Activated CD4-positive, alpha-beta T cell treated with anti-CD3 and anti-CD28 coated beads for 36 hours (primary cell): ENCODE measurements at regions of chr9 and their contacts with region 1.

Region 1: DNA sequence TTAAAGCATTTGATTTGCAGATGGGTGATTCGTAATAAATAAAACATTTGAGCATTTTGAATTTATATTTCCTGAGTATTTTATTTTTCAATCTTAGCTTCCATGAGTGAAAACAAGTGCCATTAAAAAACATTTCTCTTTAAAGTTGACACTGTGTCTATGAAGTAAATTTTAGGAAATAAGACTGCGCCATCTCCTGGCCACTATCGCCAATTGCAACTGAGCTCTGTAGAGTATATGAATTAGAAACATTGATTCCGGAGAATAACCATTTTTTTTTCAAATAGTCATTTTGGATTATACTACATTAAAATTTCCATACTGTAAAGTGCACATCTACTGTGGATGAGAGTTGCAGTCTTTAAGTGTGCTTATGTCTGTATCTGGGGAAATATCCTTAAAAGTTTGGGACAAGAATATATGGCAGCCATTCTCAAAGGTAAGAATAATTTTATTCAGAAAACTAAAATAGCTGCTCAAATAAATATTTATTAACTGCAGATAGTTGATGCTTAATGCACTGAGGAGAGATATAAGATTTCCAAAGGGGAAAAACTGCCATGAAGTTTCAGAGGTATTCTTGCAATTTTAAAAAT is 5.9 kb downstream of the DMRTA1 start:
- DNase-seq: peak; percentile 68
- ATAC-seq: no peak
- H3K4me3 Mint-ChIP-seq: no peak overlapping the region
- H3K27ac Mint-ChIP-seq: no peak overlapping the region
- H3K4me1 Mint-ChIP-seq: peaks cover 3% of the 10 kb centered on the region
- H3K27me3 Mint-ChIP-seq: peaks cover 37% of the 10 kb centered on the region

Region 2: DNA sequence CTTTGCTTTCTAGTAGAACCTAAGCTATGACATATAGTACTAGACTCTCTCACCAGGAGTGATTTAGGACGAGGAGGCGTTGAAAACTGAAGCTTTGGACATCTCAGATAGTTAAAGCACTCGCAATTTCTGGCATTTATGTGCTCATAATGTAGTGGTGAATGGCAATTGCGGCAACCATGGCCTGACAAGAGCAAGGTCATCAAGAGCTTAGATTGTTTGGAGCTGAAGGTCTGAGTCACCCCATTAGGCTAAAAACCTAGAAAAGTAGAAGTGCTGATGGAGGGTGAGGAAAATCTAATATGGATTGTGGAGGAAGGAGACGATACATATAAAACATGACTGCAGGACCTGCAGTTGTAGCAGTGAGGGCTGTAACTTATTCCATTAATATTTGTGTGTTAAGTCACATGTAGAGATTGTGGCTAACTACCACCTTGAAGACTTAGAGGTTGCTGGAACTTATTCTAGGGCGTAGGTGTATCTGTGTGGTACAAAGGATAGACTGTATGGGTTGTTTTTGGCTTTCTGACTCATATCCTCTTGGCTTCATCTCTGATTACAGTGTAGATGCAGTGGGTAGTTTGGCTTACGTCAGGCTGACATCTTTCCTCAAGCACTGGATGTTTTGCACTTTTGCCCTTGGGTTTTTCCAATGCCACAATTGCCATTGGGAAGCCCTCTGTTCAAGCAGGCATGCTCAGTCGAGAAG is 304.5 kb before region 1 on chr9:
- CTCF ChIA-PET with region 1: no interaction called
- POLR2A ChIA-PET with region 1: no interaction called
- intact Hi-C with region 1: loop called in 1 of 2 experiments (anchors 10 kb)
- DNase-seq: peak; percentile 18
- ATAC-seq: peak; percentile 97
- H3K4me3 Mint-ChIP-seq: no peak overlapping the region
- H3K27ac Mint-ChIP-seq: no peak overlapping the region
- H3K4me1 Mint-ChIP-seq: peaks cover 17% of the 10 kb centered on the region
- H3K27me3 Mint-ChIP-seq: peaks cover 32% of the 10 kb centered on the region

Region 3: GRCh38 chr9:22307013-22307711 is 145.4 kb before region 1 on chr9:
- CTCF ChIA-PET with region 1: interaction called, 7 read pairs
- POLR2A ChIA-PET with region 1: no interaction called
- intact Hi-C with region 1: loop called (anchors 1 to 2 kb)
- DNase-seq: peak; percentile 11
- ATAC-seq: no peak
- H3K4me3 Mint-ChIP-seq: no peak overlapping the region
- H3K27ac Mint-ChIP-seq: no peak overlapping the region
- H3K4me1 Mint-ChIP-seq: no peaks in the 10 kb centered on the region
- H3K27me3 Mint-ChIP-seq: peaks cover 7% of the 10 kb centered on the region

Region 4: GRCh38 chr9:22332202-22332601 is 120.3 kb before region 1 on chr9:
- CTCF ChIA-PET with region 1: no interaction called
- POLR2A ChIA-PET with region 1: no interaction called
- intact Hi-C with region 1: loop called in 1 of 2 experiments (anchors 1 kb)
- DNase-seq: no peak
- ATAC-seq: no peak
- H3K4me3 Mint-ChIP-seq: no peak overlapping the region
- H3K27ac Mint-ChIP-seq: no peak overlapping the region
- H3K4me1 Mint-ChIP-seq: no peaks in the 10 kb centered on the region
- H3K27me3 Mint-ChIP-seq: no peaks in the 10 kb centered on the region